ENCODE measurements at regions of chr9 and their contacts with region 1.

Region 1: GRCh38 chr9:137223078-137223970 is 1.3 kb upstream of the RNF208 start:
- DNase-seq: peak; percentile 98 to 99 (median 99)
- ATAC-seq: peak; percentile 91 to 95 (median 92)
- H3K4me3 ChIP-seq: peak overlapping the region; percentile 50 to 92 (median 74)
- H3K27ac ChIP-seq: peak overlapping the region; percentile 33 to 95 (median 94)
- H3K4me1 ChIP-seq: peaks cover 0 to 44% (median 24%) of the 10 kb centered on the region in 12 donors
- H3K27me3 ChIP-seq: peaks cover 0 to 7% (median 0%) of the 10 kb centered on the region in 9 donors
- CTCF ChIP-seq: no peak
- POLR2A ChIP-seq: peak in 1 of 2 donors; percentile 77

Region 2: DNA sequence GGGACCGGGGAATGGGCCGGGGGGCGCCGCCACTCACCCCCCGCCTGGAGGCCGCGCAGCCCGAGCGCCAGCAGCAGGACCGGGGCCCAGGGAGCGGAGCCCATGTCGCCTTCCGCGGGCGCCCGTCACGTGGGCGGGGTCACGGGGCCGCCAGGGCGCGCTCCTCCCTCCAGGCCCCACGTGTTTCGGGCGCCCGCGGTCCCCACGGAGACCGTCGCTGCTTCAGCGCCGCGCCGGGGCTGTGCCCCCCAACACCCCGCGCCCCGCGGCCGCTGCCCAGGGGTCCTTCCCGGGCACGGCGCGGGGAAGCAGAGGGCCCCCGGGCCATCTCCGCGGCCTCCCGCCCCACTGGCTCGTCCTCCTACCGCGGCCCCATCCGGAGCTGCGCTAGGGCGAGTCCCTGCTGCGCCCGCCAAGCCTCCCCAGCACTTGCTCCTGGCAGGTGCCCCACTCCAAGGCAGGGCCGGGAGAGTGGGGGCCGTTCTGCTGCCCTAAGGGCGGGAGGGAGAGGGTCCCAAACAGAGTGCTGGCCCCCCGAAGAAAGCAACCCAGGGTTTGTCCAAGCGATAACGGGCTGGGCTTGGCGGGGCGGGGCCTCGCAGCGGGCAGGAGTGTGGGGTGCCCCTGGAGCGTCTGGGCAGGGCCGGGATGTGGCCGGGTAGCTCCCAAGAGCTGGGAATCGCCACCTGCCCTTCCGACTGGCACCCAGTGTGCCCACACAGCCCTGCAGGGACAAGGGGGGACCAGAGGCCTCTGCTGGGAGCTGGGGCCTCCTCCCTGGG is 108.5 kb before region 1 on chr9 and contains the start of gene DPP7:
- intact Hi-C with region 1: loop called in 3 of 10 experiments (anchors 2 to 5 kb)
- DNase-seq: peak; percentile 78 to 87 (median 85)
- ATAC-seq: peak; percentile 11 to 84 (median 80)
- H3K4me3 ChIP-seq: peak within 1 kb of the TSS; percentile 56 to 94 (median 78)
- H3K27ac ChIP-seq: peak within 1 kb of the TSS; percentile 49 to 90 (median 72)
- H3K4me1 ChIP-seq: peaks cover 0 to 45% (median 23%) of the 10 kb centered on the region in 12 donors
- H3K27me3 ChIP-seq: no peaks in the 10 kb centered on the region
- CTCF ChIP-seq: peak in 1 of 12 donors; percentile 5
- POLR2A ChIP-seq: peak in 1 of 2 donors; percentile 50
- total RNA-seq, gene DPP7: 96.6 to 137 (median 119) TPM

Region 3: DNA sequence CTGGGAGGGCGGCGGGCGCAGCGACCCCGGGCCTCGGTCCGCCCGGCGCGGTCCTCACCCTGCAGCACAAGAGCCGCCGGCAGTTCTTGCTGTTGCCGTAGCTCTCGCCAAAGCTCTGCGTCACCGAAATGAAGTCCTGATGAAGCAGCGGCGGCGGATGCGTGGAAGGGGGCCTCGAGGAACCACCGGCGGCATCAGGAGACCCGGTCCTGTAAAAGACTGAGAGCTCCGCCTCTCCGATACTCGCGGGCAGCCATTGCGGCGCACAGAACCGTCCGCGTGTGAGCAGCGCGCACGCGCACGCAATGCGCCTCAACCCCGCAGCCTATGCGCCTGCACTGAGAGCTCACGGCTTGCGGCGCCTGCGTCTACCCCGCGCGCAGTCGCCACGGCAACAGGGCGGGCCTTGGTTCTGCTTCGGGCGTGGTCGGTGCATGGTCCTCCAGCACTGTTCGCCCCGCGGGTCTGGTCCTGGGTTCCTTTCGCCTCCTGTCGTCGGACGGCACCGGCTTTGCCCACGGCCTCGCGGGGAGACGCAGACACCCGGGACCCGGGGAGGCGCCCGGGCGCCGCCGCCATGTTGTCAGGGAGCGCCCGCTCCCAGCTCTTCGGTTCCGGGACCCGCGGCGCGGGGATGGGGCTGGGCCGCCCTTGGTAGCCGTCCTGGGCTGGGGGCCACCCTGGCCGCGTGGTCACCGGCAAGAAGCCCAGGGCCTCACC is 93.7 kb before region 1 on chr9:
- intact Hi-C with region 1: loop called in 5 of 10 experiments (anchors 1 to 5 kb)
- DNase-seq: peak; percentile 87 to 95 (median 91)
- ATAC-seq: peak; percentile 99 to 100 (median 99)
- H3K4me3 ChIP-seq: peak overlapping the region; percentile 52 to 89 (median 80)
- H3K27ac ChIP-seq: peak overlapping the region in 11 of 12 donors; percentile 58 to 87 (median 72)
- H3K4me1 ChIP-seq: peaks cover 0 to 39% (median 24%) of the 10 kb centered on the region in 12 donors
- H3K27me3 ChIP-seq: peaks cover 0 to 22% (median 8%) of the 10 kb centered on the region in 9 donors
- CTCF ChIP-seq: no peak
- POLR2A ChIP-seq: peak in 1 of 2 donors; percentile 59

Region 4: GRCh38 chr9:137194388-137194787 is 28.9 kb before region 1 on chr9:
- intact Hi-C with region 1: loop called in 7 of 10 experiments (anchors 5 kb)
- DNase-seq: peak; percentile 68 to 92 (median 80)
- ATAC-seq: peak; percentile 63 to 90 (median 76)
- H3K4me3 ChIP-seq: peak overlapping the region in 6 of 12 donors; percentile 10 to 37 (median 30)
- H3K27ac ChIP-seq: peak overlapping the region; percentile 26 to 89 (median 66)
- H3K4me1 ChIP-seq: peaks cover 13 to 90% (median 66%) of the 10 kb centered on the region in 12 donors
- H3K27me3 ChIP-seq: no peaks in the 10 kb centered on the region
- CTCF ChIP-seq: no peak
- POLR2A ChIP-seq: no peak